Adrenal gland (tissue), 19 donors: ENCODE measurements at regions of chr16 and their contacts with region 1.

Region 1: GRCh38 chr16:19071811-19072777 is 4.7 kb downstream of the COQ7 start:
- DNase-seq: peak; percentile 30 to 74 (median 53)
- H3K4me3 ChIP-seq: no peak overlapping the region
- H3K27ac ChIP-seq: no peak overlapping the region
- H3K4me1 ChIP-seq: peaks cover 10 to 15% of the 10 kb centered on the region in 2 donors
- H3K27me3 ChIP-seq: no peaks in the 10 kb centered on the region
- CTCF ChIP-seq: peak; percentile 26 to 54 (median 43)
- POLR2A ChIP-seq: no peak

Region 2: DNA sequence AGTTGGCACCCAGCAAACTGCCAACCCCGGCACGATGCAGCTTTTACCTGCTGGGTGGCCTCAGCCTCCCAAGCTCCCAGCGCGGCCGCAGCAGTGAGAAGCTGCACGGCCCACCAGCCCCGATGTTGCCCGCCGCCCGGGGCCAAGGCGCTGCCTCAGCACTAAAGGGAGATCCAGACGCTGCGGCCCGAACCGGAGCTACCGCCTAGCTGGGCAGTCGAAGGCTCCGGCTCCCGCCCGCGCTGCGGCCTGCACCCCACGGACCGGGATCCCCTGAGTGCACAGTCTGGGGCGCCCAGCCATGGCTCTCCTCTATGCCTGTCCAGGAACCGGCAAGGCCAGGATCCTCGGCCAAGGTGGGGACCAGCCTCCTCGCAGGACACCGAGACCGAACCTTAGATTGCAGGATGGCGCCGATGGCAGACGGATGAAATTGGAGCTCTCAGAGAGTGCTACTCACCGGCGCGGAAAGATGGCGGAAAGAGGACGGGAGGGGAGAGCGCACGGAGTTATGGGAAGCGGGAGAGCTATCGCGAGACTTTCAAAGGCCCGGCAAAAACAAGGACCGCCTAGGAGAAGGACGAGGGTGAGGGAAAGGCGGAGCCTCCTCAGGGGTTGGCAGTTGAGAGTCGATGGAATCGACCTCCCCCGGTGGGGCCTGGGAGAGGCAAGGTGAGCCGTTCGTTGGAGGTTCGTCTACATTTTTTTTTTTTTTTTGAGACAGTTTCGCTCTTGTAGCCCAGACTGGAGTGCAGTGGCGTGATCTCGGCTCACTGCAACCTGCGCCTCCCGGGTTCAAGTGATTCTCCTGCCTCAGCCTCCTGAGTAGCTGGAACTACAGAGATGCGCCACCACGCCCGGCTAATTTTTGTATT is 282.0 kb before region 1 on chr16 and contains the start of gene RPS15A:
- intact Hi-C with region 1: no loop called
- DNase-seq: peak; percentile 94 to 98 (median 97)
- H3K4me3 ChIP-seq: peak within 1 kb of the TSS; percentile 54 to 100 (median 80)
- H3K27ac ChIP-seq: peak within 1 kb of the TSS; percentile 1 to 96 (median 77)
- H3K4me1 ChIP-seq: peaks cover 23 to 71% of the 10 kb centered on the region in 2 donors
- H3K27me3 ChIP-seq: no peaks in the 10 kb centered on the region
- CTCF ChIP-seq: no peak
- POLR2A ChIP-seq: peak; percentile 48 to 59
- total RNA-seq, gene RPS15A: 839 to 2,498 (median 1,295) TPM

Region 3: GRCh38 chr16:18983565-18984424 is 88.3 kb before region 1 on chr16 and contains the start of gene TMC7:
- intact Hi-C with region 1: loop called in 1 of 2 experiments (anchors 10 kb)
- DNase-seq: peak; percentile 58 to 82 (median 62)
- H3K4me3 ChIP-seq: peak within 1 kb of the TSS in 1 of 4 donors; percentile 56
- H3K27ac ChIP-seq: peak within 1 kb of the TSS in 2 of 5 donors; percentile 20 to 41
- H3K4me1 ChIP-seq: peaks cover 6 to 9% of the 10 kb centered on the region in 2 donors
- H3K27me3 ChIP-seq: peaks cover 21% of the 10 kb centered on the region
- CTCF ChIP-seq: peak in 5 of 6 experiments; percentile 30 to 48 (median 46)
- POLR2A ChIP-seq: no peak
- total RNA-seq, gene TMC7: 0.10 to 1.4 (median 0.27) TPM in 8 of 9 donors, not detected in the other

Region 4: DNA sequence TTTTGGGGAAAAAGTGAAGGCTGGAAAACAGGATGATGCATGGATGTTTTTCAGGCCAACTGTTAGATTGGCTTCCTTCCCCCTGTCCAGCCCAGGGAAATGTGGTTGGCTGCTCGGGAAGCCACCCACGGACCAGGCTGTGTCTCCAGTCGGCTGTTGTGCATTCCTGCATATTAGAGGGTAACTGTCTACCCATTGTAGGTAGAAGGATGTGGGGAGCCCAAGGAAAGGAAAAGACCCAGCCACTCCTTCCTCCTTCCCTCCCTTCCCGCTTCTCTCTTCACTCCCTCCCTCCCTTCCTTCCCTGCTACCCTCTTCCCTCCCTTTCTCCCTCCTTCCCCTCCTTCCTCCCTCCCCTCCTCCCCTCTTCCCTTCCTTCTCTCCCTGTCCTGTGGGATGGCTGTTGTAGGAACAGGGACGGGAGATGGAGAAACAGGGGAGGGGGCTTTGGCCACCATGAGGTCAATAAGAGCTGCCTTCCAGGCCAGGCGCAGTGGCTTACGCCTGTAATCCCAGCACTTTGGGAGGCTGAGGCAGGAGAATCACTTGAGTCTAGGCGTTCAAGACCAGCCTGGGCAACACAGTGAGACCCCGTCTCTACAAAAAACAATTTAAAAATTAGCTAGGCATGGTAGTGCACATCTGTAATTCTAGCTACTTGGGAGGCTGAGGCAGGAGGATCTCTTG is 112.9 kb after region 1 on chr16:
- intact Hi-C with region 1: no loop called
- DNase-seq: no peak
- H3K4me3 ChIP-seq: no peak overlapping the region
- H3K27ac ChIP-seq: no peak overlapping the region
- H3K4me1 ChIP-seq: no peaks in the 10 kb centered on the region
- H3K27me3 ChIP-seq: no peaks in the 10 kb centered on the region
- CTCF ChIP-seq: no peak
- POLR2A ChIP-seq: no peak